ENCODE measurements at regions of chr18 and their contacts with region 1.

Region 1: DNA sequence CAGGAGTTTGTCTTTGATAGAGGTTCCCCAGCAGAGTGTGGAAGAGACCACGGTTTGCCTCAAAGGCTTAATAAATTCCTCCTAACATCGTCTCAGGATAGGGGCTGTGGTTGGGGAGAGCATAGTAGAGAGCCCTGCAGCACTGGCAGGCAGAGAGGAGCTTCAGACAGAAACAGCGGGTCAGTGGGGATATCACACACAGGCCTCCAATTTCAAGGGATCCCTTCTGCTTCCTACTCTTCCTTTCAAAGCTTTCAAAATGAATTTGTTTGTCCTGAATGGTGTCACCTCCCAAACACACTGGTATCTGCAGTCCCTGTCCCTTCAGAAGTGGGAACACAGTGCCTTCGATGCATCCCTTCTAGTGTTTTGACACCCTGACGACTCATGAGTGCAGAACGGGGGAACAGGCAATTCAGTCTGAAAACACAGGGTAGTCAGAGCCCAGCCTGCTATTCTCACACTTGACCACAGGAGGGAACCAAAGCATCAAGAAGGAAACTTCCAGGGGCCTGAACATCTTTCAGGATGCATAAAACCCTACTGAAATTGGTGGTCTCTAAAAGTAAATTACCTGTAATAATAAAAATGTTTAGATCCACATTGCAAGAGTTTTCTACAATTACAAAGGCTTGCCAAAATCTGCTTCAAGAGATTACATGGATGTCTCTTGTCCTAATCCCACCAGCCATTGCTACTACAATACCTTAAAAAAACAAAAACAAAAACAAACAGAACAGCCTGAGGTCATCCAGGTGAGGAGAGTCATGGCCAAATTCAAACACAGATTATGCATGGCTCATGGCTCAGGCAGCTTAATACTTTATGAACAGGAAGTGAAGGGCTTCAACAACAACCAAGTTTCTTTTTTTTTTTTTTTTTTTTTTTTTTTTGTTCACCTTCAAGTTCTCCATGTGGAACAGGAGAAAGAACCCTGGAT is 49.8 kb downstream of the SLC14A2 start:
- DNase-seq: peak; percentile 76
- ATAC-seq: peak; percentile 60
- H3K4me3 Mint-ChIP-seq: no peak overlapping the region
- H3K27ac Mint-ChIP-seq: peak overlapping the region; percentile 53
- H3K4me1 Mint-ChIP-seq: peaks cover 52% of the 10 kb centered on the region
- H3K27me3 Mint-ChIP-seq: no peaks in the 10 kb centered on the region

Region 2: GRCh38 chr18:45684341-45685115 is 19.4 kb after region 1 on chr18:
- CTCF ChIA-PET with region 1: interaction called, 71 read pairs
- POLR2A ChIA-PET with region 1: interaction called, 5 read pairs
- intact Hi-C with region 1: loop called (anchors 1 kb)
- DNase-seq: no peak
- ATAC-seq: no peak
- H3K4me3 Mint-ChIP-seq: no peak overlapping the region
- H3K27ac Mint-ChIP-seq: no peak overlapping the region
- H3K4me1 Mint-ChIP-seq: peaks cover 60% of the 10 kb centered on the region
- H3K27me3 Mint-ChIP-seq: peaks cover 20% of the 10 kb centered on the region

Region 3: GRCh38 chr18:45722899-45723298 is 57.8 kb after region 1 on chr18:
- CTCF ChIA-PET with region 1: interaction called, 52 read pairs
- POLR2A ChIA-PET with region 1: no interaction called
- intact Hi-C with region 1: loop called in 1 of 2 experiments (anchors 1 kb)
- DNase-seq: peak; percentile 89
- ATAC-seq: peak; percentile 97
- H3K4me3 Mint-ChIP-seq: no peak overlapping the region
- H3K27ac Mint-ChIP-seq: no peak overlapping the region
- H3K4me1 Mint-ChIP-seq: no peaks in the 10 kb centered on the region
- H3K27me3 Mint-ChIP-seq: no peaks in the 10 kb centered on the region

Region 4: GRCh38 chr18:45839414-45840395 is 174.6 kb after region 1 on chr18:
- CTCF ChIA-PET with region 1: interaction called, 13 read pairs
- POLR2A ChIA-PET with region 1: no interaction called
- intact Hi-C with region 1: loop called (anchors 1 kb)
- DNase-seq: peak; percentile 63
- ATAC-seq: peak; percentile 73
- H3K4me3 Mint-ChIP-seq: no peak overlapping the region
- H3K27ac Mint-ChIP-seq: no peak overlapping the region
- H3K4me1 Mint-ChIP-seq: peaks cover 10% of the 10 kb centered on the region
- H3K27me3 Mint-ChIP-seq: peaks cover 38% of the 10 kb centered on the region

Region 5: DNA sequence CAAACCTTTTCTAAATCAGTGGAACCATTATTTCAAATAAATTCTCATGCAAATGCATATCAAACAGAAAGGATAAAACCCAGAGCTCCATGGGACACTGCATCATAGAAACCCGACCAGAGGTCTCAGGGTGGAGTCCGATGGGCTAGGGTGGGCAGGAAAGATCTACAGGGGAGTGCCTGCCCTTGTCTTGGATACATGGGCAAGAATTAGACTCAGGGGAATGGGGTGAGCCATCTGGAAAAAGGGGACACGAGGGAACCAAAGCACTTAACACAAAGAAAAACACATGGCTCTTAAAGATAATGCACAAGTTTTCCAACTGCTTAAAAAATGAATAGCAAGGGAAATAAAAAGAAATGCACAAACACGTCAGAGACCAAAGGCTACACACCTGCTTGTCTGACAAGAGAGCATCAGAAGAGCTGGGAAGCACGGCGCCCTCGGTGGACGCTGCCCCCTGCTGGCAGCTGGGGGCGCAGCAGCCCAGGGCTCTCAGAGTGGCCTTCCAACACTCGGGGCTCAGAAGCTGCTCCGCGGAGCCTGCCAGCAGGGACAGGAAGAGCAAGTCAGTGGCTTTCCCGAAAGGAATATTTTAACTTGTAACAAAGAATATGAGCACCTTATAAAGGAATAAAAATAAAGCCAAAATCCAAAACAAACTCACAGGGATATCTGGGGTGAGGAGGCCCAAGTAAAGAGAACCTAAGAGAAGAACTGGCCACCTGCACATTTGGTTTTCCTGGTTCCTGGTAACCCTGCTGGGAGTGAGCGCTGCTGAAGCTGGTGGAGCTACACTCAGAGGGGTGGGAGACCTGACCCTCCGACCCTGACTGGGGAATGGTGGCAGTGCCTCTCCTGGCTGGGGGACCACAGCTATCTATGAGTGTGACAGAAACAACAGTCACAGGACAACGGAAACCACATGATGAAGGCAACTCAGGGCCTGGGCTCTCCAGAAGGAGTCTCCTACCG is 214.9 kb after region 1 on chr18:
- CTCF ChIA-PET with region 1: interaction called, 172 read pairs
- POLR2A ChIA-PET with region 1: interaction called, 4 read pairs
- intact Hi-C with region 1: loop called (anchors 1 kb)
- DNase-seq: peak; percentile 85
- ATAC-seq: peak; percentile 87
- H3K4me3 Mint-ChIP-seq: no peak overlapping the region
- H3K27ac Mint-ChIP-seq: no peak overlapping the region
- H3K4me1 Mint-ChIP-seq: peaks cover 10% of the 10 kb centered on the region
- H3K27me3 Mint-ChIP-seq: no peaks in the 10 kb centered on the region

Region 6: GRCh38 chr18:45967007-45967706 is 302.1 kb after region 1 on chr18 and contains the start of gene EPG5:
- CTCF ChIA-PET with region 1: interaction called, 6 read pairs
- POLR2A ChIA-PET with region 1: interaction called, 4 read pairs
- intact Hi-C with region 1: loop called in 1 of 2 experiments (anchors 1 kb)
- DNase-seq: peak; percentile 97
- ATAC-seq: peak; percentile 96
- H3K4me3 Mint-ChIP-seq: peak within 1 kb of the TSS; percentile 94
- H3K27ac Mint-ChIP-seq: peak within 1 kb of the TSS; percentile 94
- H3K4me1 Mint-ChIP-seq: peaks cover 35% of the 10 kb centered on the region
- H3K27me3 Mint-ChIP-seq: no peaks in the 10 kb centered on the region
- total RNA-seq, gene EPG5: 13.6 to 14.5 TPM